Naive thymus-derived CD4-positive, alpha-beta T cell (primary cell): ENCODE measurements at regions of chr22 and their contacts with region 1.

Region 1: GRCh38 chr22:42313804-42314581 is 43.5 kb upstream of the TCF20 start:
- DNase-seq: peak in 8 of 9 donors; percentile 34 to 73 (median 60)
- ATAC-seq: peak; percentile 75
- H3K4me3 ChIP-seq: no peak overlapping the region
- H3K4me3 Mint-ChIP-seq: peak overlapping the region in 9 of 10 donors; percentile 21 to 76 (median 68)
- H3K27ac ChIP-seq: no peak overlapping the region
- H3K27ac Mint-ChIP-seq: peak overlapping the region in 8 of 9 donors; percentile 43 to 95 (median 88)
- H3K4me1 ChIP-seq: peaks cover 23 to 46% of the 10 kb centered on the region in 2 donors
- H3K4me1 Mint-ChIP-seq: peaks cover 28 to 62% (median 52%) of the 10 kb centered on the region in 7 donors
- H3K27me3 ChIP-seq: no peaks in the 10 kb centered on the region
- H3K27me3 Mint-ChIP-seq: no peaks in the 10 kb centered on the region

Region 2: GRCh38 chr22:42169055-42169469 is 144.9 kb before region 1 on chr22:
- CTCF ChIA-PET with region 1: interaction called, 11 read pairs
- POLR2A ChIA-PET with region 1: no interaction called
- intact Hi-C with region 1: loop called (anchors 1 to 2 kb)
- DNase-seq: peak; percentile 36 to 77 (median 60)
- ATAC-seq: peak; percentile 89
- H3K4me3 ChIP-seq: no peak overlapping the region
- H3K4me3 Mint-ChIP-seq: no peak overlapping the region
- H3K27ac ChIP-seq: no peak overlapping the region
- H3K27ac Mint-ChIP-seq: peak overlapping the region in 1 of 9 donors; percentile 31
- H3K4me1 ChIP-seq: peaks cover 0 to 15% of the 10 kb centered on the region in 2 donors
- H3K4me1 Mint-ChIP-seq: peaks cover 13 to 39% (median 33%) of the 10 kb centered on the region in 7 donors
- H3K27me3 ChIP-seq: no peaks in the 10 kb centered on the region
- H3K27me3 Mint-ChIP-seq: no peaks in the 10 kb centered on the region

Region 3: DNA sequence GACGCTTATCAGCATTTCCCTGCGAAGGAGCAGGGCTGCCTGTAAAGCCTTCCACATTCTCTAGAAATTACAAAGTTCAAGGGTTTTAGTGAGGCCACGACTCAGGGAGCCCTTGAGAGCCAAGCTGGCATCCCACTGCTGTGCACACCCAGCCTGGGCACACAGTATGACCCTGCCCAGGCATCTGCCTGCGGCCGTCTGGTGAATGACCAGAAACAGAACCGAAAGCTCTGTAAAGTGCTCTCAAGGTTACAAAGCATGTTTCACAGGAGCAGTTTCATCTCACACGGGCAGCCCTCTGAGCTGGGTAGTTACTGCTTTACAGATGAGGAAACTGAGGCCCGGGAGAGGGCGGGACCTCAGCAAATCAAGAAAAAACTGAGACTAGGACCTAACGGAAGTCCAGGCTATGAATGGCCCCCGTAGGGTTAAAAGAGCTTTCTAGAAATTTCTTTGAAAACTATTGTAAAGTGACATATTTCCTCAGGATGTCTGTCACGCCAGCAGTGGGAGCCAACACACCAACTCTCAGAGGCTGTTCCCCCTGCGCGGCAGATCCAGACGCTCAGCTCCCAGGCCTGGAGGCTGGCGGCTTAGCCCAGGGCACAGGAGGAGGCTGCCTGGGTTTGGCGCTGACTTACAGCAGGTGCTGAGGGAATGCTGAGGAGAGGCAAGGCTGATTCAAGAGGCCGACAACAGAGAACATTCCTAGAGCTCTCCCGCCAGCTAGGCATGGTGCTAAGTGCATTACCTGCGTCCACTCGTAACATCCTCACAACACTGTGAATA is 35.8 kb before region 1 on chr22:
- CTCF ChIA-PET with region 1: interaction called, 9 read pairs
- POLR2A ChIA-PET with region 1: no interaction called
- intact Hi-C with region 1: loop called in 1 of 2 experiments (anchors 1 kb)
- DNase-seq: no peak
- ATAC-seq: no peak
- H3K4me3 ChIP-seq: no peak overlapping the region
- H3K4me3 Mint-ChIP-seq: no peak overlapping the region
- H3K27ac ChIP-seq: no peak overlapping the region
- H3K27ac Mint-ChIP-seq: no peak overlapping the region
- H3K4me1 ChIP-seq: no peaks in the 10 kb centered on the region
- H3K4me1 Mint-ChIP-seq: peaks cover 10 to 29% (median 15%) of the 10 kb centered on the region in 7 donors
- H3K27me3 ChIP-seq: no peaks in the 10 kb centered on the region
- H3K27me3 Mint-ChIP-seq: peaks cover 0 to 15% (median 4%) of the 10 kb centered on the region in 5 donors

Region 4: DNA sequence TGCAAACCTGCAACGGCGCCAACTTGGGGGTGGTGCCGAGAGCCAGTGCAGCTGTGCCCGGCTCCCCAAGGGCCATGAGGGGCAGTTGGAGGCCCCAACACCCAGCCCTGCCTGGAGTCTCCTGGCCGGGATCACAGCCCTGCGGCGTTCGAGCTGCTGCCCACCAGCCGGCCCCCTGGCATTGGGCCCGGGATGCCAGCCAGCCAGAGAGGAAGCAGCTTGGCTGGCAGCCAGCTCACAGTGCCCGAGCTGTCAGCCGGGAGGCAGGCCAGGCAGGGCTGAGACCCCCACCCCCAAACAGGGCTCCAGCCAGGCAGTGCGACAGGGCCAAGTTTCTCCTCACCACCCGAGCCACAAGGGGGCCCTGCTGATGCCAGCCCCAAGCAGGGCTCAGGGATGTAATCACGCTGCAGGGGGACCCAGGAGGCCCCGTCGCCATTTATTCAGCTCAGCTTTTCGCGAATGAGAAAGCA is 17.6 kb before region 1 on chr22:
- CTCF ChIA-PET with region 1: interaction called, 4 read pairs
- POLR2A ChIA-PET with region 1: interaction called, 50 read pairs
- intact Hi-C with region 1: loop called in 1 of 2 experiments (anchors 1 kb)
- DNase-seq: peak in 4 of 9 donors; percentile 37 to 51 (median 44)
- ATAC-seq: no peak
- H3K4me3 ChIP-seq: no peak overlapping the region
- H3K4me3 Mint-ChIP-seq: peak overlapping the region in 5 of 10 donors; percentile 2 to 63 (median 29)
- H3K27ac ChIP-seq: peak overlapping the region; percentile 39
- H3K27ac Mint-ChIP-seq: peak overlapping the region in 8 of 9 donors; percentile 36 to 95 (median 90)
- H3K4me1 ChIP-seq: peaks cover 23 to 69% of the 10 kb centered on the region in 2 donors
- H3K4me1 Mint-ChIP-seq: peaks cover 50 to 94% (median 79%) of the 10 kb centered on the region in 7 donors
- H3K27me3 ChIP-seq: no peaks in the 10 kb centered on the region
- H3K27me3 Mint-ChIP-seq: no peaks in the 10 kb centered on the region

Region 5: DNA sequence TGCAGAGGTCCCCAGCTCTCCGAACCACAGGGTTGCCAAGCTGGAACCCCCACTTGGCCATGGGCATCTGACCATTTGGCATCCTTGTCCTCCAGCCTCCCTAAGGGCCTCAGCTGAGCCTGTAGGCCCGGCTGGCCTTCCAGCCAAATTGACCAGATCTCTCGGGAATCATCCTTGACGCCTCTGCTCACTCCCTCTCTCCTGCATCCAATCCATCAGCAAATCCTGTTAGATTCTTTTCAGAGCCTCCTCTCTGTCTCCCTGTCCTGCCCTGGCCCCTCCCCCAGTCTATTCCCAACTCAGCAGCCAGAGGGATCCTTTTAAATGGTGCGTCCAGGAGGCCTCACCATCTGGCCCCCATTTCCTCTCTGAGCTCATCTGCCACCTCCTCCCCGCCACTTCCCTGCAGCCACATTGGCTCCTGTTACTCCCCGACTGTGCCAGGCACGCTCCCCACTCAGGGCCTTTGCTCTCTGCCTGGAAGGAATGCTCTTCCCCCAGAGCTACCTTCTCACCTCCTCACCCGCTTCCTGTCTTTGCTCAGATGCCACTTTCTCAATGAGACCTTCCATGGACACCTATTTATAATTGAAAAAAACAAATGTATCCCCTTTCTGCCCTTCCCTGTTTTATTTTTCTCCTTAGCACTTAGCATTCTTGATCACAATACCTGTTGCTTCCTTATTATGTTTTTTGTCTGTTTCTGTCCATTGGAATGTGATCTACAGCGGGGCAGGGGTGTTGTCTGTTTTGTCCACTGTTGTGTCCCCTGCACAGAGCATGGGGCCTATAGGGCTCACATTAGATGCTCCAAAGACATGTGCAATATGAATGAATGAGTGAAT is 40.1 kb after region 1 on chr22:
- CTCF ChIA-PET with region 1: no interaction called
- POLR2A ChIA-PET with region 1: no interaction called
- intact Hi-C with region 1: no loop called
- DNase-seq: no peak
- ATAC-seq: no peak
- H3K4me3 ChIP-seq: no peak overlapping the region
- H3K4me3 Mint-ChIP-seq: no peak overlapping the region
- H3K27ac ChIP-seq: no peak overlapping the region
- H3K27ac Mint-ChIP-seq: peak overlapping the region in 1 of 9 donors; percentile 72
- H3K4me1 ChIP-seq: no peaks in the 10 kb centered on the region
- H3K4me1 Mint-ChIP-seq: peaks cover 0 to 7% (median 0%) of the 10 kb centered on the region in 7 donors
- H3K27me3 ChIP-seq: no peaks in the 10 kb centered on the region
- H3K27me3 Mint-ChIP-seq: peaks cover 0 to 3% (median 0%) of the 10 kb centered on the region in 5 donors